Dorsolateral prefrontal cortex (tissue), 120 donors: ENCODE measurements at regions of chr2 and their contacts with region 1.

Region 1: GRCh38 chr2:61016808-61017555 is 538 bp upstream of the PEX13 start:
- DNase-seq: peak; percentile 31 to 78 (median 70)
- H3K4me3 ChIP-seq: peak overlapping the region; percentile 57 to 98 (median 89)
- H3K27ac ChIP-seq: peak overlapping the region; percentile 72 to 98 (median 91)
- H3K27me3 ChIP-seq: no peaks in the 10 kb centered on the region
- CTCF ChIP-seq: peak in 6 of 56 donors; percentile 2 to 20 (median 14)

Region 2: DNA sequence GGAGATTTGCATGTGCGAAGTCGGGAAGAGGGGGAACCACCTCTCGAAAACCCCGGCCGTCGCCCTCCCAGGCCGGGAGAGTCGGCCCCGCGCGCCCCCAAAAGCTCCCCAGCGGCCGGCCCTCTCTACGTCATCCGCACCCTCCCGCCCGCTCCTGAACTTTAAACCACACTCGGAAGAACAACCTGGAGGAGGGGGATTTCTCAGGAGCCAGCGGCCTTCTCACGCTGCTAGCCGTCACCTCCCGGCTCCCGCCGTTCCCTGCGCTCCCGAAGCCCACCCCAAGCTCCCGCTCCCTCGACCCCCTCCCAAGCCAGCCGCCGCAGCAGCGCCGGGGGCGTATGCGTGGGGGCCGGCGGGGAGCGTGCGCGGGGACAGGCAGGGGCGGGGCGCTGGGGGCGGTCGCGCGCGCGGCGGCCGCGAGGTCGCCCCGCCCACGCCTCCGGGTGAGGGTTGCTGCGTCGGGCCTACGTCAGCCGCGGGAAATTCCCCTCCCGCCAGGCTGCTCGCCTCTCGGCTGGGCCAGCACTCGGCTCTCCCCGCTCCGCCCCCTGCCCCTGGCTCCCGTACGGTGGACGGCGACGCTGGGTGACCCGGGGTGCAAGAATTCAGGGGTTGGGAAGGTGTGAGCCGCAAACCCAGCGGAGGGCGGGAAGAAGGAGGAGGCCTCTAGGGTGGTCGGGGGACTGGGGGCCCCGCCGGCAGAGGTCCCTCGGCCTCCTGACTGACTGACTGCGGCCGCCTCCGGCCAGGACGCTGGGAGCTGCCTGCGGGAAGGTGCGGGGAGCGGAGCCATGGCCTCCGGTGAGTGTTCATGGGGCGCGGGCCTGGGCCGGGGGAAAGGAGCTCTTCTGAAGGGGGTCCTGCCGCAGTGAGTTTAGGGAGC is 135.7 kb before region 1 on chr2 and contains the start of gene REL:
- intact Hi-C with region 1: loop called in 1 of 2 experiments (anchors 10 kb)
- DNase-seq: peak; percentile 66 to 93 (median 85)
- H3K4me3 ChIP-seq: peak within 1 kb of the TSS; percentile 63 to 99 (median 92)
- H3K27ac ChIP-seq: peak within 1 kb of the TSS; percentile 63 to 98 (median 92)
- H3K27me3 ChIP-seq: no peaks in the 10 kb centered on the region
- CTCF ChIP-seq: peak in 8 of 56 donors; percentile 2 to 22 (median 16)
- total RNA-seq, gene REL: 8.8 to 20.3 (median 12.3) TPM

Region 3: GRCh38 chr2:61065715-61066709 is 49.0 kb after region 1 on chr2 and contains the start of gene SANBR:
- intact Hi-C with region 1: loop called (anchors 5 to 10 kb)
- DNase-seq: peak; percentile 72 to 96 (median 86)
- H3K4me3 ChIP-seq: peak within 1 kb of the TSS; percentile 60 to 99 (median 89)
- H3K27ac ChIP-seq: peak within 1 kb of the TSS in 57 of 59 donors; percentile 41 to 92 (median 82)
- H3K27me3 ChIP-seq: no peaks in the 10 kb centered on the region
- CTCF ChIP-seq: peak in 24 of 56 donors; percentile 2 to 48 (median 30)
- total RNA-seq, gene SANBR: 19.3 to 47.8 (median 32.5) TPM